A549 (cell line): ENCODE measurements at regions of chr1 and their contacts with region 1.

Region 1: GRCh38 chr1:226083302-226084101 is 21.0 kb downstream of the H3-3A start:
- DNase-seq: peak; percentile 87 to 96
- ATAC-seq: peak; percentile 84 to 92
- H3K4me3 ChIP-seq: peak overlapping the region; percentile 68
- H3K27ac ChIP-seq: peak overlapping the region; percentile 85 to 94
- H3K4me1 ChIP-seq: peaks cover 4% of the 10 kb centered on the region; the same call in 2 of the 3 replicates
- CTCF ChIP-seq: no peak
- EP300 ChIP-seq: no peak; a peak in 1 of 5 replicates
- POLR2A ChIP-seq: peak; percentile 59; the same call in 1 of the 2 replicates
- RAD21 ChIP-seq: no peak

Region 2: DNA sequence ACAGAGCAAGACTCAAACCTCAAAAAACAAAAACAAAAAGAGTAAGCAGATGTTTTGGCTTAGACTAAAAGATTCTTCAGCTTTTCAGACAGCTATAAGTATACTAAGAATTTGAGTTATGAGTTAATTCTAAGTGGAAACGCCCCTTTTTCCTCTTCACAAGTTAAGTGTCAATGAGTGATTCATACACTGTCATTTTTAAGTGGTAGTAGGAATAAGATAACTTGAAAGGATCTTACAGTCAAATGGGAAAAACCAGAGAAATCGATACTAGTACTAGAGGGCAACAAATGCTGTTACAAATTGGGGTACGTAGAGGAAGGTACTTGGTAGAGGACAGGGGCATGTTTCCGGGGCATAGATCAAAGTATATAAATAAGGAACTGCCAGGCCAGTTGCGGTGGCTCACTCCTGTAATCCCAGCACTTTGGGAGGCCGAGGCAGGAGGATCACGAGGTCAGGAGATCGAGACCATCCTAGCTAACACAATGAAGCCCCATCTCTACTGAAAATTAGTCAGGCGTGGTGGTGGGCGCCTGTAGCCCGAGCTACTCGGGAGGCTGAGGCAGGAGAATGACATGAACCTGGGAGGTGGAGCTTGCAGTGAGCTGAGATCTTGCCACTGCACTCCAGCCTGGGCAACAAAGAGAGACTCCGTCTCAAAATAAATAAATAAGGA is 13.6 kb before region 1 on chr1:
- CTCF ChIA-PET with region 1: interaction called, 75 read pairs
- POLR2A ChIA-PET with region 1: interaction called, 19 read pairs
- DNase-seq: no peak
- ATAC-seq: no peak
- H3K4me3 ChIP-seq: no peak overlapping the region
- H3K27ac ChIP-seq: no peak overlapping the region
- H3K4me1 ChIP-seq: peaks cover 24% of the 10 kb centered on the region
- CTCF ChIP-seq: no peak
- EP300 ChIP-seq: no peak
- POLR2A ChIP-seq: no peak
- RAD21 ChIP-seq: no peak

Region 3: GRCh38 chr1:226109829-226110248 is 26.3 kb after region 1 on chr1:
- CTCF ChIA-PET with region 1: interaction called, 10 read pairs
- POLR2A ChIA-PET with region 1: interaction called, 13 read pairs
- DNase-seq: peak; percentile 86 to 96
- ATAC-seq: peak; percentile 87 to 90
- H3K4me3 ChIP-seq: peak overlapping the region; percentile 96
- H3K27ac ChIP-seq: peak overlapping the region; percentile 95 to 97
- H3K4me1 ChIP-seq: peaks cover 9% of the 10 kb centered on the region
- CTCF ChIP-seq: no peak
- EP300 ChIP-seq: no peak
- POLR2A ChIP-seq: peak; percentile 60
- RAD21 ChIP-seq: no peak